MCF 10A (cell line): ENCODE measurements at regions of chr18 and their contacts with region 1.

Region 1: GRCh38 chr18:35478520-35479435 is 19.0 kb downstream of the INO80C start:
- DNase-seq: peak; percentile 97
- H3K4me3 Mint-ChIP-seq: peak overlapping the region; percentile 61
- H3K27ac Mint-ChIP-seq: peak overlapping the region; percentile 86
- H3K4me1 Mint-ChIP-seq: peaks cover 45% of the 10 kb centered on the region
- H3K27me3 Mint-ChIP-seq: no peaks in the 10 kb centered on the region
- CTCF ChIP-seq: no peak

Region 2: GRCh38 chr18:35413163-35413511 is 65.6 kb before region 1 on chr18:
- CTCF ChIA-PET with region 1: interaction called, 8 read pairs
- POLR2A ChIA-PET with region 1: interaction called, 18 read pairs
- intact Hi-C with region 1: loop called (anchors 5 kb)
- DNase-seq: no peak
- H3K4me3 Mint-ChIP-seq: no peak overlapping the region
- H3K27ac Mint-ChIP-seq: peak overlapping the region; percentile 64
- H3K4me1 Mint-ChIP-seq: peaks cover 37% of the 10 kb centered on the region
- H3K27me3 Mint-ChIP-seq: no peaks in the 10 kb centered on the region
- CTCF ChIP-seq: no peak